Natural killer cell (primary cell): ENCODE measurements at regions of chr22 and their contacts with region 1.

Region 1: GRCh38 chr22:19122143-19122751 is at the start of gene DGCR2:
- DNase-seq: peak; percentile 92 to 98
- ATAC-seq: peak; percentile 95 to 99 (median 96)
- H3K4me3 ChIP-seq: peak within 1 kb of the TSS; percentile 93
- H3K4me3 Mint-ChIP-seq: peak within 1 kb of the TSS; percentile 88
- H3K27ac ChIP-seq: peak within 1 kb of the TSS; percentile 77
- H3K27ac Mint-ChIP-seq: peak within 1 kb of the TSS; percentile 63 to 90
- H3K4me1 ChIP-seq: peaks cover 49% of the 10 kb centered on the region
- H3K4me1 Mint-ChIP-seq: peaks cover 36 to 43% of the 10 kb centered on the region in 2 donors
- H3K27me3 ChIP-seq: no peaks in the 10 kb centered on the region
- H3K27me3 Mint-ChIP-seq: no peaks in the 10 kb centered on the region
- CTCF ChIP-seq: no peak
- total RNA-seq, gene DGCR2: 27.5 to 44.1 (median 41.3) TPM

Region 2: DNA sequence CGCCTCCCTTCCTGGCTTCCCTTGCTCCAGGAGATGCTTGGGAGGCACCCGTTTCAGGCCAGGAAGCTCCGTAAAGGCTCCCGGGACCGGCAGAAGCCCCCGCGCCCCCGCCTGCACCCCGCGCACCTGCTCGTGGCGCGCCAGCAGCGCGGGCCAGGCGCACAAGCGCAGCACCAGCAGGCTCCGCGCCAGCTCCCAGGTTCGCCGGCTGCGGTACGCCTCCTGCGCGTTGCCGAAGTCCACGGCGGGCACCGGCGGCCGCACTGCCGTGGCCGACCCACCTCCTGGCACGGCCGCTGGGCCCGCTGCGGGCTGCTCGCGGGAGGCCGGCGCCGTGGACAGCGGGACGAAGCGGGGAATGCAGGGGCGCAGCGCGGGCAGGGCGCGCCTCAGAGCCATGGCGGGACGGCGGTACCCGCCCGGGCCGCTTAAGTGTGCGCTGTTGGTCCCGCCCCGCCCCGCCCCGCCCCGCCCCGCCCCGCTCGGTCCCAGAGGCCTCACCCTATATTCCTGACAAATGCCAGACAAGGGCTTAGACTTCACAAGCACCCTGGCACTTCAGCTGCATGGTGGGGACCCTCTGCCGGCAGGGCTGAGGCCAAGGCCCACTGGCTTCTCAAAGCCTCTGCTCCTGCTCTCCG is 186.2 kb before region 1 on chr22 and contains the start of gene PRODH:
- intact Hi-C with region 1: no loop called
- DNase-seq: no peak
- ATAC-seq: no peak
- H3K4me3 ChIP-seq: no peak within 1 kb of the TSS
- H3K4me3 Mint-ChIP-seq: no peak within 1 kb of the TSS
- H3K27ac ChIP-seq: no peak within 1 kb of the TSS
- H3K27ac Mint-ChIP-seq: no peak within 1 kb of the TSS
- H3K4me1 ChIP-seq: no peaks in the 10 kb centered on the region
- H3K4me1 Mint-ChIP-seq: no peaks in the 10 kb centered on the region
- H3K27me3 ChIP-seq: no peaks in the 10 kb centered on the region
- H3K27me3 Mint-ChIP-seq: no peaks in the 10 kb centered on the region
- CTCF ChIP-seq: no peak
- total RNA-seq, gene PRODH: not detected

Region 3: GRCh38 chr22:19035474-19036228 is 86.6 kb before region 1 on chr22:
- intact Hi-C with region 1: no loop called
- DNase-seq: no peak
- ATAC-seq: peak in 1 of 3 donors; percentile 44
- H3K4me3 ChIP-seq: no peak overlapping the region
- H3K4me3 Mint-ChIP-seq: no peak overlapping the region
- H3K27ac ChIP-seq: no peak overlapping the region
- H3K27ac Mint-ChIP-seq: no peak overlapping the region
- H3K4me1 ChIP-seq: no peaks in the 10 kb centered on the region
- H3K4me1 Mint-ChIP-seq: peaks cover 0 to 5% of the 10 kb centered on the region in 2 donors
- H3K27me3 ChIP-seq: no peaks in the 10 kb centered on the region
- H3K27me3 Mint-ChIP-seq: peaks cover 0 to 3% of the 10 kb centered on the region in 2 donors
- CTCF ChIP-seq: no peak

Region 4: GRCh38 chr22:19109198-19110067 is 12.8 kb before region 1 on chr22:
- intact Hi-C with region 1: loop called (anchors 1 kb)
- DNase-seq: peak in 1 of 2 donors; percentile 85
- ATAC-seq: peak; percentile 86 to 91 (median 88)
- H3K4me3 ChIP-seq: peak overlapping the region; percentile 9
- H3K4me3 Mint-ChIP-seq: peak overlapping the region; percentile 85
- H3K27ac ChIP-seq: peak overlapping the region; percentile 82
- H3K27ac Mint-ChIP-seq: peak overlapping the region; percentile 80 to 84
- H3K4me1 ChIP-seq: peaks cover 42% of the 10 kb centered on the region
- H3K4me1 Mint-ChIP-seq: peaks cover 59 to 65% of the 10 kb centered on the region in 2 donors
- H3K27me3 ChIP-seq: no peaks in the 10 kb centered on the region
- H3K27me3 Mint-ChIP-seq: no peaks in the 10 kb centered on the region
- CTCF ChIP-seq: no peak

Region 5: GRCh38 chr22:19132693-19133400 is 10.6 kb after region 1 on chr22:
- intact Hi-C with region 1: no loop called
- DNase-seq: no peak
- ATAC-seq: peak in 1 of 3 donors; percentile 12
- H3K4me3 ChIP-seq: no peak overlapping the region
- H3K4me3 Mint-ChIP-seq: no peak overlapping the region
- H3K27ac ChIP-seq: no peak overlapping the region
- H3K27ac Mint-ChIP-seq: peak overlapping the region in 1 of 2 donors; percentile 59
- H3K4me1 ChIP-seq: no peaks in the 10 kb centered on the region
- H3K4me1 Mint-ChIP-seq: peaks cover 0 to 13% of the 10 kb centered on the region in 2 donors
- H3K27me3 ChIP-seq: no peaks in the 10 kb centered on the region
- H3K27me3 Mint-ChIP-seq: no peaks in the 10 kb centered on the region
- CTCF ChIP-seq: no peak

Region 6: DNA sequence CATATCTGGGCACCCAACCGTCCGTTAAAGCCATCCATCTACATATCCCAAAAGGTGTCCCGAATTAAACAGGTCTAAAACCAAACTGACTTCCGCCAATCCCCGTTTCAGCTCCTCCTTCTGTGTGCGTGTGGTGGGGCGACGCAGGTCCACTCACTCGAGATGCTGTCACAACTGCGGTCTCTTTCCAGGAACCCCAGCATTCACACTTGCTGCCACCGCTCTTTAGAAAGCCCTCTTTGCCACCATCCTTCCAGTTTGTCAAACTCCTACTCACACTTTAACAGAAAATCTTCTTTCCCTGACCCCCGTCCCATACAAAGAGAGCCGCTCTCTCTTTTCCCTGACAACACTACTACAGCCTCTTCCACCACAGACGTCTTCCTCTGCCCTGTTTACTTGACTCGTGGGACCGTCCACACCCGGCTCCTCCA is 21.7 kb after region 1 on chr22:
- intact Hi-C with region 1: loop called (anchors 1 kb)
- DNase-seq: peak; percentile 51 to 64
- ATAC-seq: peak; percentile 38 to 52 (median 41)
- H3K4me3 ChIP-seq: peak overlapping the region; percentile 73
- H3K4me3 Mint-ChIP-seq: peak overlapping the region; percentile 100
- H3K27ac ChIP-seq: peak overlapping the region; percentile 86
- H3K27ac Mint-ChIP-seq: peak overlapping the region; percentile 99 to 100
- H3K4me1 ChIP-seq: peaks cover 14% of the 10 kb centered on the region
- H3K4me1 Mint-ChIP-seq: peaks cover 17 to 22% of the 10 kb centered on the region in 2 donors
- H3K27me3 ChIP-seq: peaks cover 5% of the 10 kb centered on the region
- H3K27me3 Mint-ChIP-seq: peaks cover 10 to 14% of the 10 kb centered on the region in 2 donors
- CTCF ChIP-seq: no peak

Region 7: DNA sequence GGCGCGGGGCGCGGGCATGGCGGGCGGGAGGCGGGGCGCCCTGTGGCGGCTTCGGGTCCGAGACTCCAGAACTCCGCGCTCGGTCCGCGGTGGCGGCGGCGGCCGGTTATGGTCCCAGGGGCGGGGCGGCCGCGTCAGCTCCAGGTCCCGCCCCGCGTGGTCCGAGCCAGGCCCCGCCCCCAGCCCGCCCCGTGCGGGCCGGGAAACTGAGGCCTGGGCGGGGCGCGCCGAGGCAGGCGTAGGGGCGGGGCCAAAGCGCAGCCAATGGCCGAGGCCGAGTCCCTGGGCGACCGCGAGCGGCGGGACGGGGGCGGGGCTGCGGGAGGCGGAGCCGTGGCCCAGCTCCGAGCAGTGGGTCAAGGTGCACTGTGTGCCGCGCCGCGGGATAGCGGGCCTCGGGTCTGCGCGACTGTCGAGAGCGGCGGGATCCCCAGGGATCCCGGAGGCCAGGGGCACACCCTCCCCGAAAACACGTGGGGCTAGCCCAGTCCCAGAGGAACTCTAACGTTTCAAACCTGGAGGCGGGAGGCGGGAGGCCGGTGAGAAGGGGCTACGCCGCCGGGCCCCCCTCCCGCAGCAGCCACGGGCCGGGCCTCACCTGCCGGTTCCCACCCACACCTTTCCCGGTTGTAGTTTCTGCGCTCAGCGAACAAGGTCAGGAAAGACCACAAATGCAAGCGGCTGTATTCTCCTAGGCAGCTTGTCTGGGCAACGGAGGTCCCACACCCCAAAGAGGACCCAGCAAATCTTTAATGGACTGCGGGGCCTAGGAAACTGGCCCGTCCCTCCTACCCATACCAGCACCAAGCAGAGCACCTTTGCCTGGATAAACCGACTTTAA is 56.6 kb after region 1 on chr22 and contains the start of gene SLC25A1:
- intact Hi-C with region 1: loop called (anchors 2 kb)
- DNase-seq: peak; percentile 58 to 86
- ATAC-seq: peak; percentile 68 to 80 (median 79)
- H3K4me3 ChIP-seq: peak within 1 kb of the TSS; percentile 66
- H3K4me3 Mint-ChIP-seq: peak within 1 kb of the TSS; percentile 88
- H3K27ac ChIP-seq: peak within 1 kb of the TSS; percentile 45
- H3K27ac Mint-ChIP-seq: peak within 1 kb of the TSS; percentile 46 to 79
- H3K4me1 ChIP-seq: peaks cover 30% of the 10 kb centered on the region
- H3K4me1 Mint-ChIP-seq: peaks cover 6 to 11% of the 10 kb centered on the region in 2 donors
- H3K27me3 ChIP-seq: no peaks in the 10 kb centered on the region
- H3K27me3 Mint-ChIP-seq: no peaks in the 10 kb centered on the region
- CTCF ChIP-seq: no peak
- total RNA-seq, gene SLC25A1: 24.8 to 29.6 (median 26.9) TPM

Region 8: DNA sequence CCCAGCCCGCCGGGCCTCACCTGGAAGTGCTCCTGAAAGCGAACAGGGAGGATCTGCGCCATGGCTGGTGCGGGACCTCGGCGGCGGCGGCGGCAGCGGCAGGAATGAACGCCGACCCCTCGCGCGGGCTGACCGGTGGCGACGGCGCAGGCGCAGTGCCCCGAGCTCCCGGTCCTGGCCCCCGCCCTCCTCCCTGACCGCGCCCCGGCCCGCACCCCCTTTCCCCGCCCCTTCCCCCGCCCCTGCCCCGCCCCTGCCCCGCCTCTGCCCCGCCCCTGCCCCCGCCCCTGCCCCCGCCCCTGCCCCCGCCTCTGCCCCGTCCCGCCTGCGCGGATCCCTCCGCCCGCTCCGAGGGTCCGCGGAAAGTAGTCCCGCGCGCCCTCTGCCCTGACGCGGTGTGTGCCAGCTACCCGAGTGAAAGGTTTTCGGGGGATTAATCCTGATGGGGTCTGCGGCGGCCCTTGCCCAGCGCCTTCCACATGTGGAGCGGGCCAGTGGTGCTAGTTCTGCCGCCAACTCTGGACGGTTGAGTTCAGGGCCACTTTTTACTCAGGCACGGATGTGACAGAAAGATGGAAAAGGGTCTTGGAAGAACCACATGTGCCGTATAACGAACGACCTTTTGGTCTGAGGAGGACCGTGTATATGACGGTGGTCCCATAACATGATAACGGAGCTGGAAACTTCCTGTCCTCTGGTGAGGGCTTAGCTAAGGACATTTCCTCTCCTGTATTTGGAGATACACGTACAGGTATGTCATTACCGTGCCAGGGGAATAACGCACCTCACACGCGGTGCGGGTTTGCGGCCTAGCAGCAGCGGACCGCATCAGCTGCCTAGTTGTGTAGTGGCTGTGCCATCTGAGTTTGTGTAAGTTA is 169.6 kb after region 1 on chr22 and contains the start of gene CLTCL1:
- intact Hi-C with region 1: loop called (anchors 5 kb)
- DNase-seq: peak; percentile 57 to 76
- ATAC-seq: peak; percentile 78 to 84 (median 81)
- H3K4me3 ChIP-seq: peak within 1 kb of the TSS; percentile 84
- H3K4me3 Mint-ChIP-seq: peak within 1 kb of the TSS; percentile 87
- H3K27ac ChIP-seq: peak within 1 kb of the TSS; percentile 43
- H3K27ac Mint-ChIP-seq: peak within 1 kb of the TSS; percentile 41 to 75
- H3K4me1 ChIP-seq: peaks cover 18% of the 10 kb centered on the region
- H3K4me1 Mint-ChIP-seq: peaks cover 22 to 26% of the 10 kb centered on the region in 2 donors
- H3K27me3 ChIP-seq: peaks cover 22% of the 10 kb centered on the region
- H3K27me3 Mint-ChIP-seq: peaks cover 18 to 42% of the 10 kb centered on the region in 2 donors
- CTCF ChIP-seq: no peak
- total RNA-seq, gene CLTCL1: 0.86 to 1.2 (median 1.2) TPM

Region 9: GRCh38 chr22:19432133-19432851 is 310.0 kb after region 1 on chr22 and contains the start of gene MRPL40:
- intact Hi-C with region 1: loop called (anchors 10 kb)
- DNase-seq: peak; percentile 82 to 91
- ATAC-seq: peak; percentile 80 to 94 (median 82)
- H3K4me3 ChIP-seq: peak within 1 kb of the TSS; percentile 95
- H3K4me3 Mint-ChIP-seq: peak within 1 kb of the TSS; percentile 97
- H3K27ac ChIP-seq: peak within 1 kb of the TSS; percentile 97
- H3K27ac Mint-ChIP-seq: peak within 1 kb of the TSS; percentile 93 to 100
- H3K4me1 ChIP-seq: peaks cover 40% of the 10 kb centered on the region
- H3K4me1 Mint-ChIP-seq: peaks cover 28 to 37% of the 10 kb centered on the region in 2 donors
- H3K27me3 ChIP-seq: no peaks in the 10 kb centered on the region
- H3K27me3 Mint-ChIP-seq: no peaks in the 10 kb centered on the region
- CTCF ChIP-seq: no peak
- total RNA-seq, gene MRPL40: 11.6 to 16.7 (median 14.2) TPM